Natural killer cell (primary cell): ENCODE measurements at regions of chr17 and their contacts with region 1.

Region 1: DNA sequence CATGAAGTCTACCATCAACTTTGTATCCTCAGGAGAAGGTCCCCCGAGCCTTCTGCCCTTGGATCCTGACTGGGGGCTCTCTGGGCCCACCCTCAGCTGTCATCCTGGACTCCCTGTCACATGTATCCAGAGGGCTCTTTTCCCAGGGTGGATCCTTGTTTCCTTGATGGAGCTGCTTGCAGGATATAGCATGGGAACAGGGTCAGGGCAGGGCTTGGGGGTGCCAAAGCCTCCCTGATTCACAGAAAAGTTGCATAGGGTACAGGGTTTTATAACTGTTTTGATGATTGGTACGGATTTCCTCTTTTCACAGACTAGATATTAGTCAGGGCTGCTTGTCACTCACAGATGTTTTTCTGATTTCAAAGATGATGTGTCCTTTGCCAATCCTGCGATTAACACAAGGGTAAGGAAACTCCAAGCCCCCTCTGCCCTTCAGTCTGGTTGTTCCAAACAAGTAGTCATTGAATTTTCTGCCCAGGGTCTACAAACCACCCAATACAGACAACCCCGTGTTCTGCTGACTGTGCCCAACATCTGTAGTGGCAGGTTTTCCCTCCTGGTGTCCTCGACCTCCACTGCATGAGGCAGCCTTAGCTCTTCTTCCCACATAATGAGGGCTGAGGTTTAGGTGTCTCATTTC is 20.6 kb upstream of the SLC35G3 start:
- DNase-seq: peak in 1 of 2 donors; percentile 62
- ATAC-seq: peak; percentile 36 to 56 (median 48)
- H3K4me3 ChIP-seq: no peak overlapping the region
- H3K4me3 Mint-ChIP-seq: peak overlapping the region; percentile 68
- H3K27ac ChIP-seq: peak overlapping the region; percentile 93
- H3K27ac Mint-ChIP-seq: peak overlapping the region; percentile 85 to 92
- H3K4me1 ChIP-seq: peaks cover 51% of the 10 kb centered on the region
- H3K4me1 Mint-ChIP-seq: peaks cover 69 to 79% of the 10 kb centered on the region in 2 donors
- H3K27me3 ChIP-seq: no peaks in the 10 kb centered on the region
- H3K27me3 Mint-ChIP-seq: no peaks in the 10 kb centered on the region
- CTCF ChIP-seq: no peak

Region 2: GRCh38 chr17:35161281-35161761 is 53.4 kb before region 1 on chr17:
- intact Hi-C with region 1: loop called (anchors 1 kb)
- DNase-seq: peak; percentile 37 to 74
- ATAC-seq: peak; percentile 69 to 81 (median 77)
- H3K4me3 ChIP-seq: peak overlapping the region; percentile 14
- H3K4me3 Mint-ChIP-seq: peak overlapping the region; percentile 79
- H3K27ac ChIP-seq: peak overlapping the region; percentile 85
- H3K27ac Mint-ChIP-seq: peak overlapping the region; percentile 84 to 87
- H3K4me1 ChIP-seq: peaks cover 40% of the 10 kb centered on the region
- H3K4me1 Mint-ChIP-seq: peaks cover 37 to 43% of the 10 kb centered on the region in 2 donors
- H3K27me3 ChIP-seq: no peaks in the 10 kb centered on the region
- H3K27me3 Mint-ChIP-seq: no peaks in the 10 kb centered on the region
- CTCF ChIP-seq: no peak

Region 3: GRCh38 chr17:35235917-35236316 is 21.2 kb after region 1 on chr17:
- intact Hi-C with region 1: no loop called
- DNase-seq: peak in 1 of 2 donors; percentile 27
- ATAC-seq: no peak
- H3K4me3 ChIP-seq: no peak overlapping the region
- H3K4me3 Mint-ChIP-seq: no peak overlapping the region
- H3K27ac ChIP-seq: no peak overlapping the region
- H3K27ac Mint-ChIP-seq: no peak overlapping the region
- H3K4me1 ChIP-seq: peaks cover 10% of the 10 kb centered on the region
- H3K4me1 Mint-ChIP-seq: peaks cover 52% of the 10 kb centered on the region in 2 donors
- H3K27me3 ChIP-seq: no peaks in the 10 kb centered on the region
- H3K27me3 Mint-ChIP-seq: no peaks in the 10 kb centered on the region
- CTCF ChIP-seq: no peak